B cell (primary cell): ENCODE measurements at regions of chr6 and their contacts with region 1.

Region 1: GRCh38 chr6:33000055-33000454 is 9.3 kb downstream of the HLA-DOA start:
- DNase-seq: peak; percentile 79
- ATAC-seq: peak; percentile 94
- H3K4me3 ChIP-seq: no peak overlapping the region
- H3K4me3 Mint-ChIP-seq: peak overlapping the region; percentile 11
- H3K27ac ChIP-seq: peak overlapping the region in 1 of 2 donors; percentile 31
- H3K27ac Mint-ChIP-seq: peak overlapping the region; percentile 53
- H3K4me1 ChIP-seq: peaks cover 10 to 13% of the 10 kb centered on the region in 2 donors
- H3K4me1 Mint-ChIP-seq: peaks cover 21% of the 10 kb centered on the region
- H3K27me3 ChIP-seq: no peaks in the 10 kb centered on the region
- H3K27me3 Mint-ChIP-seq: no peaks in the 10 kb centered on the region
- CTCF ChIP-seq: peak; percentile 70

Region 2: DNA sequence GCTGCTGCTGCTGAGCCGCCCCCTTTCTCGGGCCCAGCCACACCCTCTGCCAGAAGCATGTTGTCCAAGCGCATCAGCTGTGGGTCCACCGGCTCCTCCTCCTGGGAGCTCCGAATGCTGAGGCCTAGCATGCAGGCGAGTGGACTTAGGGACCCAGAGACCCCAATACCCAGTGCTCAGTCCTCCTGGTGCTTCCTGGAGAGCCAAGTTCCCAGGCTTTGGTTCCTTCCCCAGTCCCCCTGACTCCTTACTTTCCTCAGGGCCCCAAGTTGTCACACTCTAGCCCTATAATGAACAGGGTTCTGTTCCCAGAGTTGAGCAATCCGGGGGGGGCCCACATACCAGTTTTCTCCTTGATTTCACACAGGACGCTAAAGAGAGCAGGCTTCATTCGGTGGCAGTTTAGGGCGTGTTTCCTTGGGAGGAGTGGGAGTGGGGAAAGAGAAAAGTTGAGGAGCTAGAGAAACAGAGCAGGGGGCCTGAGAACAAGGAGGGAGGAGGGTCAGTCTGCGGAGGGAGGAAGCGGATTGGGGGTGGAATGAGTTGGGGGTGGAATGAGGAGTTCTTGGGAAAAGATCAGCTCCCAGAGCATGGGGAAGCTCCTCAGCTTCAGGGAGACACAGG is 811.6 kb before region 1 on chr6:
- CTCF ChIA-PET with region 1: no interaction called
- POLR2A ChIA-PET with region 1: no interaction called
- intact Hi-C with region 1: no loop called
- DNase-seq: no peak
- ATAC-seq: no peak
- H3K4me3 ChIP-seq: peak overlapping the region; percentile 74 to 99 (median 95)
- H3K4me3 Mint-ChIP-seq: peak overlapping the region; percentile 91
- H3K27ac ChIP-seq: peak overlapping the region in 1 of 2 donors; percentile 97
- H3K27ac Mint-ChIP-seq: peak overlapping the region; percentile 95
- H3K4me1 ChIP-seq: peaks cover 38 to 56% of the 10 kb centered on the region in 2 donors
- H3K4me1 Mint-ChIP-seq: peaks cover 62% of the 10 kb centered on the region
- H3K27me3 ChIP-seq: no peaks in the 10 kb centered on the region
- H3K27me3 Mint-ChIP-seq: no peaks in the 10 kb centered on the region
- CTCF ChIP-seq: no peak

Region 3: GRCh38 chr6:33082702-33083101 is 82.6 kb after region 1 on chr6:
- CTCF ChIA-PET with region 1: interaction called, 14 read pairs
- POLR2A ChIA-PET with region 1: interaction called, 8 read pairs
- intact Hi-C with region 1: no loop called
- DNase-seq: peak; percentile 65
- ATAC-seq: peak; percentile 63
- H3K4me3 ChIP-seq: peak overlapping the region in 1 of 5 experiments; percentile 7
- H3K4me3 Mint-ChIP-seq: peak overlapping the region; percentile 78
- H3K27ac ChIP-seq: peak overlapping the region; percentile 27 to 82
- H3K27ac Mint-ChIP-seq: peak overlapping the region; percentile 89
- H3K4me1 ChIP-seq: peaks cover 59 to 60% of the 10 kb centered on the region in 2 donors
- H3K4me1 Mint-ChIP-seq: peaks cover 72% of the 10 kb centered on the region
- H3K27me3 ChIP-seq: no peaks in the 10 kb centered on the region
- H3K27me3 Mint-ChIP-seq: no peaks in the 10 kb centered on the region
- CTCF ChIP-seq: peak; percentile 68

Region 4: DNA sequence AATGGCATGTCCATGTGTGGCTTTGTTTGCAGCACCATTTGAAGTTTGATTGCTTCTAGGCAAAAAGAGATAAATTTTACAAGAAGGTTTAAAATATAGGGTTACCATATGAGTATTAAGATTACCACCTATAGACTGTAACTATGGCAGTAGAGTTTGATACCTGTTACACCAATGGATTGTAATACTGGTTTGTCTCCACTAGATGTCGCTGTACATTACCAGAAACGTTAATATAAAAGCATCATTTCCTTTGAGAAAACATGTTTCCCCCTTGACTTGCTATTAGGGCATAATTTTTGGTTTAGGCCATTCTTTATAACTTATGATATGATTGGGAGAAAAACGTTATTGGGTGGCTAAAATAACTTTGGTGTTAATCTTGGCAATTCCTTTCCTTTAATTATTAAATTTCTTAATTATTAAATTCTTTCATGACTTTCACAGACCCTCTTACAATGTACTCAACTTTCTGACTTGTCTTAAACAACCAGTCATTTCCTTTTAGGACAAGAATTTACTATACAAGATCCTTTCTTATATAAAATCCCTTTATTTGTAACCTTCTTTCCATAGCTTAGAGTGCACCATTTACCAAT is 118.6 kb after region 1 on chr6:
- CTCF ChIA-PET with region 1: interaction called, 15 read pairs
- POLR2A ChIA-PET with region 1: no interaction called
- intact Hi-C with region 1: no loop called
- DNase-seq: peak; percentile 82
- ATAC-seq: peak; percentile 48
- H3K4me3 ChIP-seq: no peak overlapping the region
- H3K4me3 Mint-ChIP-seq: peak overlapping the region; percentile 47
- H3K27ac ChIP-seq: no peak overlapping the region
- H3K27ac Mint-ChIP-seq: no peak overlapping the region
- H3K4me1 ChIP-seq: peaks cover 43 to 47% of the 10 kb centered on the region in 2 donors
- H3K4me1 Mint-ChIP-seq: peaks cover 46% of the 10 kb centered on the region
- H3K27me3 ChIP-seq: no peaks in the 10 kb centered on the region
- H3K27me3 Mint-ChIP-seq: peaks cover 3% of the 10 kb centered on the region
- CTCF ChIP-seq: peak; percentile 92

Region 5: DNA sequence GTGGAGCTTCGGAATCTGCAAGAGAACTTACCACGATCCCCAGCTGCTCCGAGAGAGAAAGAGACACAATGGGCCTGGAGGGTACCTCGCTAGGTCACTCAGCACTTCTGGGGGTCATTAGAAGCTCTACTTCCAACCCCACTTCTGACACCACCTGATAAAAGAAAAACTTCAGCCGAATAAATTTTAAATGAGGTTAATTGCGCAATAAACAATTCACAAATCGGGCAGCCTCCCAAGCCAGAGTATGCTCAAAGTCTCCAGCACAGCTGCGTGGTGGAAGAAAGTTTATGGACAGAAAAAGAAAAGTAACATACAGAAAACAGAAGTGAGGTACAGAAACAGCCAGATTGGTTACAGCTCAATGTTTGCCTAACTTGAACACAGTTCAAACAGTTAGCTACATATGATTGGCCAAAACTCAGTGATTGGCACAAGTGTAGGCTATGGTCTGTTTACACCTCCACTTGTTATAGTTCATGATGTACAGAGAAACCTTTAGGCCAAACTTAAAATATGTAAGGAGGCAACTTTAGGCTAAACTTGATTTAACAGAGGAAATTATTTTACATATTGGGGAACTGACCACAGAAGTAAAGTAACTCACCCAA is 139.6 kb after region 1 on chr6:
- CTCF ChIA-PET with region 1: interaction called, 122 read pairs
- POLR2A ChIA-PET with region 1: no interaction called
- intact Hi-C with region 1: no loop called
- DNase-seq: no peak
- ATAC-seq: no peak
- H3K4me3 ChIP-seq: no peak overlapping the region
- H3K4me3 Mint-ChIP-seq: no peak overlapping the region
- H3K27ac ChIP-seq: no peak overlapping the region
- H3K27ac Mint-ChIP-seq: no peak overlapping the region
- H3K4me1 ChIP-seq: peaks cover 9 to 27% of the 10 kb centered on the region in 2 donors
- H3K4me1 Mint-ChIP-seq: peaks cover 23% of the 10 kb centered on the region
- H3K27me3 ChIP-seq: no peaks in the 10 kb centered on the region
- H3K27me3 Mint-ChIP-seq: peaks cover 5% of the 10 kb centered on the region
- CTCF ChIP-seq: no peak

Region 6: GRCh38 chr6:33172688-33173534 is 172.9 kb after region 1 on chr6:
- CTCF ChIA-PET with region 1: interaction called, 9 read pairs
- POLR2A ChIA-PET with region 1: no interaction called
- intact Hi-C with region 1: loop called (anchors 1 kb)
- DNase-seq: peak; percentile 58
- ATAC-seq: no peak
- H3K4me3 ChIP-seq: no peak overlapping the region
- H3K4me3 Mint-ChIP-seq: no peak overlapping the region
- H3K27ac ChIP-seq: no peak overlapping the region
- H3K27ac Mint-ChIP-seq: no peak overlapping the region
- H3K4me1 ChIP-seq: peaks cover 0 to 10% of the 10 kb centered on the region in 2 donors
- H3K4me1 Mint-ChIP-seq: peaks cover 9% of the 10 kb centered on the region
- H3K27me3 ChIP-seq: peaks cover 0 to 14% (median 6%) of the 10 kb centered on the region in 4 experiments
- H3K27me3 Mint-ChIP-seq: peaks cover 23% of the 10 kb centered on the region
- CTCF ChIP-seq: peak; percentile 48